ENCODE measurements at regions of chr9 and their contacts with region 1.

Region 1: GRCh38 chr9:133103183-133103986 is 17.7 kb downstream of the RALGDS start:
- DNase-seq: peak; percentile 38 to 80 (median 59)
- ATAC-seq: peak; percentile 79
- H3K4me3 ChIP-seq: no peak overlapping the region
- H3K4me3 Mint-ChIP-seq: no peak overlapping the region
- H3K27ac ChIP-seq: peak overlapping the region in 1 of 2 experiments; percentile 50
- H3K27ac Mint-ChIP-seq: peak overlapping the region; percentile 33
- H3K4me1 ChIP-seq: no peaks in the 10 kb centered on the region
- H3K4me1 Mint-ChIP-seq: no peaks in the 10 kb centered on the region
- H3K27me3 ChIP-seq: no peaks in the 10 kb centered on the region
- H3K27me3 Mint-ChIP-seq: no peaks in the 10 kb centered on the region
- CTCF ChIP-seq: peak; percentile 83

Region 2: GRCh38 chr9:133115448-133116345 is 12.3 kb after region 1 on chr9:
- CTCF ChIA-PET with region 1: interaction called, 28 read pairs
- POLR2A ChIA-PET with region 1: interaction called, 3 read pairs
- intact Hi-C with region 1: loop called in 1 of 2 experiments (anchors 2 kb)
- DNase-seq: peak in 3 of 9 experiments; percentile 42 to 67 (median 55)
- ATAC-seq: peak; percentile 50
- H3K4me3 ChIP-seq: no peak overlapping the region
- H3K4me3 Mint-ChIP-seq: no peak overlapping the region
- H3K27ac ChIP-seq: peak overlapping the region in 1 of 2 experiments; percentile 75
- H3K27ac Mint-ChIP-seq: peak overlapping the region; percentile 62
- H3K4me1 ChIP-seq: peaks cover 71% of the 10 kb centered on the region
- H3K4me1 Mint-ChIP-seq: peaks cover 60% of the 10 kb centered on the region
- H3K27me3 ChIP-seq: no peaks in the 10 kb centered on the region
- H3K27me3 Mint-ChIP-seq: no peaks in the 10 kb centered on the region
- CTCF ChIP-seq: no peak

Region 3: DNA sequence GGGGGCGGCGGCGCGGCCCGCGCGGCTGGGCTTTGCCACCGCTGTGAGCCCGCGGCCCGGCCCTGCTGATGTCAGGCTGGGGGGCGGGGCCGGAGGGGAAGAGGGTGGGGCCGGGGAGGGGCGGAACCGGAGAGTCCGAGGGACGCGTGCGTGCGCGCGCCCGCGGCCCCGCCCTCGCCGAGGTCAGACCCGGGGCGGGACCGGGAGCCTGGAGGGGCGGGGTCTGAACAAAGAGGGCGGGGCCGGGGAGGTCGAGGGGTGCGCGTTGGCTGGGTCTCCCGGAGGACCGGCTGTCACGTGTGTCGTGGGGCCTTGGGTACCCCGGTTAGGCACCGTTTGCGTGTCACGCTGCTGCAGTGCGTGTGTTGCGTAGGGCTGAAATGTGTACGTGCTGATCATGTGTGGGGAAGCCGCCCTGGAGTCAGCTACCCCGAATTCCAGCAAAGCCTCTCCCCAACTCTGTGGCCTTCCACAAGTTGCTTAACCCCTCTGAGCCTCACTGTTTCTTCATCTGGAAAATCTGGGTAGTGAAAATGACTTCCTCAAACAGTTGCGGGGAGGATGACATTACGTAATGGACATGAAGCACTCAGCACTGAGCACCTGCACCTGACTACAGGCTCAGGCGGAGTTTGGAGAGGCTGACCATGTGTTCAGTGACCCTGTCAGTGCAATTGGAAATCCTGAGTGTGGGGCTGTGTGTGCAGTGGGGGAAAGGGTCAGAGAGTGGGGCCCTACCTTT is 18.0 kb after region 1 on chr9 and contains the start of gene RALGDS:
- CTCF ChIA-PET with region 1: interaction called, 28 read pairs
- POLR2A ChIA-PET with region 1: interaction called, 3 read pairs
- intact Hi-C with region 1: loop called in 1 of 2 experiments (anchors 2 kb)
- DNase-seq: peak; percentile 84 to 95 (median 92)
- ATAC-seq: peak; percentile 83
- H3K4me3 ChIP-seq: peak within 1 kb of the TSS; percentile 41 to 53
- H3K4me3 Mint-ChIP-seq: peak within 1 kb of the TSS; percentile 84
- H3K27ac ChIP-seq: peak within 1 kb of the TSS; percentile 66 to 96
- H3K27ac Mint-ChIP-seq: peak within 1 kb of the TSS; percentile 98
- H3K4me1 ChIP-seq: peaks cover 63% of the 10 kb centered on the region
- H3K4me1 Mint-ChIP-seq: peaks cover 70% of the 10 kb centered on the region
- H3K27me3 ChIP-seq: no peaks in the 10 kb centered on the region
- H3K27me3 Mint-ChIP-seq: no peaks in the 10 kb centered on the region
- CTCF ChIP-seq: no peak
- total RNA-seq, gene RALGDS: 177 to 186 TPM

Region 4: DNA sequence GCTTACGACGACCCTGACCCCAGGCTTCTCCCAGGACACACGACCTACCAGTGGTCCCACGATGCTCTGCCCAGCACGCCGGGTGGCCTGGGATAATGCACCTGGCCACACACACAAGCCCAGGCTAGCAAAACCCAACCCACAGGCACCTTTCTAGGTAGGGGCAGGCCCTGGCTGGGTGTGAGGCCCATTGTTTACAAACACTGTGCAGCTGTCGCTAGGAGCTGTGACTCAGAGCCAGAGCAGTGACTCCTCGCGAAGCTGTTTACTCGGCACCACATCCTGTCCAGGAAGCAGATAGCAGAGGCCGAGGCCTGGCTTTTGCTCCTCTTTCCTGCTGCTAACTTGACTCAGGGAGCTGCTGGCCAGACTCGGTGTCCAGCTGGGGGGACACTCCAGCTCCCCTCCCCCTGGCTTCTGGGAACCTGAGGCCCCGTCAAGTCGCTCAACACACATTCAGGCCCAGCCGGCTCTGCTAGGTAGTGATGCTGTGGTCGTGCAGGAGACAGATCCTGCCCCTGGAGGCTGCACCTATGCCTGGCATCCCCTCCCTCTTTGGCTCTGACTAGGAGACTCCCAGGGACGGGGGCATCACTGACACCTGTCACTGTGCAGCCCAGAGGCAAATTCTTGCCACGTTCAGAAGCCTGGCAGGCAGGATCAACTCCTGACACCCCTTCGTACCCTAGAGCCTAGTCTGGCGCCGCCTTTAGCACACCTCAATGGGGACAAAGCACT is 30.5 kb after region 1 on chr9:
- CTCF ChIA-PET with region 1: interaction called, 10 read pairs
- POLR2A ChIA-PET with region 1: interaction called, 4 read pairs
- intact Hi-C with region 1: no loop called
- DNase-seq: peak; percentile 85 to 98 (median 92)
- ATAC-seq: peak; percentile 75
- H3K4me3 ChIP-seq: peak overlapping the region in 1 of 2 experiments; percentile 23
- H3K4me3 Mint-ChIP-seq: peak overlapping the region; percentile 72
- H3K27ac ChIP-seq: peak overlapping the region; percentile 92 to 100
- H3K27ac Mint-ChIP-seq: peak overlapping the region; percentile 99
- H3K4me1 ChIP-seq: peaks cover 67% of the 10 kb centered on the region
- H3K4me1 Mint-ChIP-seq: peaks cover 66% of the 10 kb centered on the region
- H3K27me3 ChIP-seq: no peaks in the 10 kb centered on the region
- H3K27me3 Mint-ChIP-seq: no peaks in the 10 kb centered on the region
- CTCF ChIP-seq: no peak

Region 5: GRCh38 chr9:133184962-133185361 is 81.6 kb after region 1 on chr9:
- CTCF ChIA-PET with region 1: interaction called, 10 read pairs
- POLR2A ChIA-PET with region 1: no interaction called
- intact Hi-C with region 1: loop called (anchors 1 to 2 kb)
- DNase-seq: peak in 6 of 9 experiments; percentile 17 to 80 (median 35)
- ATAC-seq: peak; percentile 49
- H3K4me3 ChIP-seq: no peak overlapping the region
- H3K4me3 Mint-ChIP-seq: no peak overlapping the region
- H3K27ac ChIP-seq: no peak overlapping the region
- H3K27ac Mint-ChIP-seq: no peak overlapping the region
- H3K4me1 ChIP-seq: peaks cover 8% of the 10 kb centered on the region
- H3K4me1 Mint-ChIP-seq: peaks cover 13% of the 10 kb centered on the region
- H3K27me3 ChIP-seq: peaks cover 3% of the 10 kb centered on the region in 2 experiments
- H3K27me3 Mint-ChIP-seq: peaks cover 31% of the 10 kb centered on the region
- CTCF ChIP-seq: peak; percentile 46